ENCODE measurements at regions of chr2 and their contacts with region 1.

Region 1: GRCh38 chr2:105235388-105236054 is 6.0 kb upstream of the GPR45 start:
- DNase-seq: peak in 5 of 6 donors; percentile 29 to 84 (median 63)
- ATAC-seq: peak; percentile 60 to 79 (median 76)
- H3K4me3 ChIP-seq: no peak overlapping the region
- H3K27ac ChIP-seq: no peak overlapping the region
- H3K4me1 ChIP-seq: no peaks in the 10 kb centered on the region
- H3K27me3 ChIP-seq: no peaks in the 10 kb centered on the region
- CTCF ChIP-seq: peak; percentile 24 to 61 (median 56)

Region 2: DNA sequence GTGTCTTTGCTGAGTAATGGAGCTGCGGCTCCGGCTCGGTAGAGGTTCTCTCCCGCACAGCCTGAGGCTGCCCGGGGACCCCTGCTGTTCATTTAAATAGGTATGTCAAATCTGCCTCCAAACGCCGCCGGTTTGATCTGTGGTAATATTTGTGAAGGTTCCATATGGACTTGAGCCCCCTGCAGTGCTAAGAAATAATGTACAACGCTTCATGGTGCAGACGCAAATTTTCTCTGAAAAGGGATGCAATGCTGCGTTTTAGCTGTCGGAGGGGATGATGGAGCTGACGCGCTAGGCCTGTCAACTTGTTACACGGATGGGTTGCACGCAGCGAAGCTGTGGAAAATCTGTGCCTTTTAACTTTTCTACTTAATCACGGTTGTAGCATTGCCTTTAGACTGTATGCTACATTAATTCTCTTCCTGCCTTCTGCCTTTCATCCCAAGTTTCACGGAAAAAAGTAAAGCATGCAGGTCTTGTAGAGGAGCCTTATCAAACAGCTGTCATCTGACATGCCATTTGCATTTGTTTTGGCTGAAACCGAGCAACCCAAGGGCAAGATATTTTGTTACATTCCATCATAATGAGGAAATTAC is 154.4 kb before region 1 on chr2:
- intact Hi-C with region 1: no loop called
- DNase-seq: no peak
- ATAC-seq: peak; percentile 76 to 84 (median 80)
- H3K4me3 ChIP-seq: peak overlapping the region in 1 of 4 donors; percentile 8
- H3K27ac ChIP-seq: no peak overlapping the region
- H3K4me1 ChIP-seq: peaks cover 12 to 23% (median 16%) of the 10 kb centered on the region in 3 donors
- H3K27me3 ChIP-seq: no peaks in the 10 kb centered on the region
- CTCF ChIP-seq: no peak

Region 3: GRCh38 chr2:105114551-105114950 is 121.0 kb before region 1 on chr2:
- intact Hi-C with region 1: loop called (anchors 5 to 10 kb)
- DNase-seq: no peak
- ATAC-seq: peak in 3 of 4 donors; percentile 62 to 84 (median 80)
- H3K4me3 ChIP-seq: no peak overlapping the region
- H3K27ac ChIP-seq: no peak overlapping the region
- H3K4me1 ChIP-seq: no peaks in the 10 kb centered on the region
- H3K27me3 ChIP-seq: no peaks in the 10 kb centered on the region
- CTCF ChIP-seq: peak; percentile 34 to 70 (median 66)